Endothelial cell of umbilical vein (primary cell): ENCODE measurements at regions of chr4 and their contacts with region 1.

Region 1: DNA sequence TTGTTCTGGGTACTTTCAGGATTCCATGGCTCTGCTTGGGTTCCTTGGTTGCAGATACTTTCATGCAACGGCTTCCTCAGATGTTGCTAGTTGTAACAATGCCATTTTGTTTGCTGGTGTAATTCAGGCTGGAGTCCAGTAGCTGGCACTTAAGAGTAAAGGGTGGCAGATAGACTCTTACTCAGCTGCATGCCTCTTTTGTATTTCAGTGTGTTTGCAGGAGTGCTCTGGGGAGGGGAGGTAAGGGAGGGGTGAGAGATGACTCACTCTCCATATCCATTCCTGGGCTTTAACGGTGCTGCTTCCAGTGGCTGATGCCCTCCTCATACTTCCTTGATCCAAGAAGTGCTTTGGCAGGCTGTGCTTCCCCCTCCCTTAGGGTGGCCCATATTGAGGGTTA is 155.2 kb downstream of the ZNF330 start:
- DNase-seq: peak; percentile 65
- H3K4me3 ChIP-seq: no peak overlapping the region
- H3K27ac ChIP-seq: no peak overlapping the region
- H3K4me1 ChIP-seq: no peaks in the 10 kb centered on the region
- H3K27me3 ChIP-seq: no peaks in the 10 kb centered on the region
- CTCF ChIP-seq: peak in 1 of 2 donors; percentile 32
- POLR2A ChIP-seq: no peak

Region 2: DNA sequence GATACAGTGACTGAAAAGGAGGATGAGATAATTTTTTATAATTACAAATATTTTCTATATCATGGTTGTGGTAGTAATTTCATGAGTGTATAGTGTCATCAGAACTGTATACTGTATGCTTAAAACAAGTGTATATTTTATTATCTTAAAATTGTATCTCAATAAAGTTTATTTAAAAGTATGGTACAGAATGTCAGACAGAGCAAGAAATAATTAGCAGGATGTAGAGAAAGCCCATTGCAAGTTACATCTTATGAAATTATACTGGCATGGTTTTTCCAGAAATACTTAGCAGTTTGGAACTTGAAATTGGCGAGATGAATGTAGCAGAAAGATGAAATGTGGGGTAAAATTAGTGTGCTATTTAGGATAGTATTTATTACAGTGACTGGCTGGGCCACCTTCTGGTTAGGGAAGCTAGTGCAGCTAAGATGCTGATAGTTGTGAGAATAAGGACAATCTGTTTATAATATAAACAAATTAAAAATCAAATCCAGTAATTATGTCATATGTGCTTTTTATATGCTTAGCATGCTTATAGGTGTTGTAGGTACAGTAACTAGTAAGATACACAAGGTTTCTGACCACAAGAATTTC is 335.3 kb after region 1 on chr4:
- CTCF ChIA-PET with region 1: interaction called, 10 read pairs
- POLR2A ChIA-PET with region 1: no interaction called
- dilution Hi-C with region 1: no loop called
- intact Hi-C with region 1: no loop called
- DNase-seq: peak; percentile 50
- H3K4me3 ChIP-seq: no peak overlapping the region
- H3K27ac ChIP-seq: no peak overlapping the region
- H3K4me1 ChIP-seq: peaks cover 4% of the 10 kb centered on the region
- H3K27me3 ChIP-seq: no peaks in the 10 kb centered on the region
- CTCF ChIP-seq: peak; percentile 40 to 52
- POLR2A ChIP-seq: no peak